HEK293 (cell line): ENCODE measurements at regions of chr20 and their contacts with region 1.

Region 1: GRCh38 chr20:38221119-38221589 is 39.4 kb downstream of the KIAA1755 start:
- H3K4me3 ChIP-seq: no peak overlapping the region
- H3K27ac ChIP-seq: no peak overlapping the region
- H3K4me1 ChIP-seq: no peaks in the 10 kb centered on the region
- CTCF ChIP-seq: peak; percentile 93

Region 2: GRCh38 chr20:37564388-37565133 is 656.6 kb before region 1 on chr20:
- CTCF ChIA-PET with region 1: interaction called, 54 read pairs
- POLR2A ChIA-PET with region 1: no interaction called
- H3K4me3 ChIP-seq: no peak overlapping the region
- H3K27ac ChIP-seq: no peak overlapping the region
- H3K4me1 ChIP-seq: peaks cover 5% of the 10 kb centered on the region; the same call in 1 of the 2 replicates
- CTCF ChIP-seq: peak; percentile 92

Region 3: DNA sequence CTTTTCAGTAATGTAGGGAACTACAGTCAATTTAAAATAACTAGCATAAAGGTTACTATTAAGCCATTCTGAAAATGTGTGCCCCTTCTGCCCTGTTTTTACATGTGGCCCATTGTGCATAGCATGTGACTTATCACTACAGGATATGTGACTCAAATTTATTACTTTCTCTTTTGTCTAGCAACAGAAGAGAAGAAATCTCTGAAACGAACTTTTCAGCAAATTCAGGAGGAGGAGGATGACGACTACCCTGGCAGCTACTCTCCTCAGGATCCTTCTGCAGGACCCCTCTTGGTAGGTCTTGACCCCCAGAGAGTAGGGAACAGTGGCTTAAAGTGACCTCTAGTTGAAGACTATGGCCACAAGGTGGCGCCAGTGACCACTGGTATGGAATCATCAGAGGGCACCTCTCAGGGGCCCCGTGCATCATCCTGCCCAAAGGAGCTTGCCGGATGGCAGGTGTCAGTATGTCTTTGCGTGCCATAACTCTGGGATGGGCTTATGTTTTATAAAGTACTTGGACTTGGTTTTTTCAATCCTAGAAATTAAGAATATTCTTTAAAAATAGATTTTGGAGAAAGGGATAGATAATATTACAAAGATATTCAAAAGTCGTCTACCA is 163.7 kb before region 1 on chr20:
- CTCF ChIA-PET with region 1: interaction called, 220 read pairs
- POLR2A ChIA-PET with region 1: interaction called, 3 read pairs
- H3K4me3 ChIP-seq: no peak overlapping the region
- H3K27ac ChIP-seq: no peak overlapping the region
- H3K4me1 ChIP-seq: peaks cover 3% of the 10 kb centered on the region; the same call in 1 of the 2 replicates
- CTCF ChIP-seq: peak; percentile 75; the same call in 1 of the 2 replicates

Region 4: GRCh38 chr20:38156888-38157634 is 64.1 kb before region 1 on chr20:
- CTCF ChIA-PET with region 1: interaction called, 4 read pairs
- POLR2A ChIA-PET with region 1: interaction called, 12 read pairs
- H3K4me3 ChIP-seq: no peak overlapping the region
- H3K27ac ChIP-seq: no peak overlapping the region
- H3K4me1 ChIP-seq: no peaks in the 10 kb centered on the region
- CTCF ChIP-seq: no peak

Region 5: DNA sequence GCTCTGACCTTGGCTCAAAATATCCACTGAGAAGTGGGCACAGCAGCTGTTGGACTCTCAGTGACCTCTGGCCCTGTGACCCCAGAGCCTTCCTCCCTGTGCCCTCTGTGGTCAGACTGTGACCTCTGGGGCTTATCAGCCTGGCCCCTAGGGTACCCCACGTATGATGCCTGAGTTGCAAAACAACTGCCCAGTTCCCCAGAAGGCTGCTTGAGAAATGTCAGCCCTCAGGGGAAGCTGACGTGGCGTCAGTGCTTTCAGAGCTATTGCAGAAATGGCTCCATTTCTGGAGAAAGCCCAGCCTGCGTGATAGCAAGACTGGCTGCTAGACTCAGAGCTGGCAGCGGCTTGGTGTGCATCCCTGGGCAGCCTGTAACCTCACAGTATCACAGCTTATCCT is 24.6 kb before region 1 on chr20:
- CTCF ChIA-PET with region 1: interaction called, 14 read pairs
- POLR2A ChIA-PET with region 1: no interaction called
- H3K4me3 ChIP-seq: no peak overlapping the region
- H3K27ac ChIP-seq: no peak overlapping the region
- H3K4me1 ChIP-seq: no peaks in the 10 kb centered on the region
- CTCF ChIP-seq: no peak

Region 6: DNA sequence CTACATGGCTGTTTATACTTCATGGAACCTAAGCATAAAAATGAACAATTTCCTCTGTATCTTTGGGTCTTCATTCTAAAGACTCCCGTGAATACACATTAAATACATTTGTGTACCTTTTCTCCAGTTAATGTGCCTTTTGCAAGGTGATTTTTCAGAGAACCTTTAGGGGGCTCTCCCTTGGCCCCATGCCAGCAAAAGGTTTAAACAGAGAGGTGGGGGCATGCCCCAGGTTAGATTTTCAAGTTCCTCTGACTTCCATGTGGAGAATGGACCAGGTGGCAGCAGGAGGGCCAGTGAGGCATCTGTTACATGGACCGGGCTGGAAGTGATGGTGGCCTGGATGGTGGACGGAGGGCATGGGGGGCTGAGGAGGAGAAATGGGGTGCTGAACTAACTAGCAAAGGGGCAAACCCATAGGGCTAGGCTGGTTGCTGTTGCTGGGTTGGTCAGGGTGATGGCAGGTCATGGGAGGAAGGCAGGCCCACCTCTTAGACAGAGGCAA is 62.0 kb after region 1 on chr20:
- CTCF ChIA-PET with region 1: no interaction called
- POLR2A ChIA-PET with region 1: no interaction called
- H3K4me3 ChIP-seq: no peak overlapping the region
- H3K27ac ChIP-seq: no peak overlapping the region
- H3K4me1 ChIP-seq: no peaks in the 10 kb centered on the region
- CTCF ChIP-seq: no peak

Region 7: GRCh38 chr20:38298705-38299288 is 77.6 kb after region 1 on chr20:
- CTCF ChIA-PET with region 1: no interaction called
- POLR2A ChIA-PET with region 1: no interaction called
- H3K4me3 ChIP-seq: no peak overlapping the region
- H3K27ac ChIP-seq: no peak overlapping the region
- H3K4me1 ChIP-seq: no peaks in the 10 kb centered on the region
- CTCF ChIP-seq: no peak

Region 8: GRCh38 chr20:38412877-38413577 is 191.9 kb after region 1 on chr20:
- CTCF ChIA-PET with region 1: interaction called, 12 read pairs
- POLR2A ChIA-PET with region 1: no interaction called
- H3K4me3 ChIP-seq: no peak overlapping the region
- H3K27ac ChIP-seq: no peak overlapping the region
- H3K4me1 ChIP-seq: no peaks in the 10 kb centered on the region
- CTCF ChIP-seq: no peak

Region 9: DNA sequence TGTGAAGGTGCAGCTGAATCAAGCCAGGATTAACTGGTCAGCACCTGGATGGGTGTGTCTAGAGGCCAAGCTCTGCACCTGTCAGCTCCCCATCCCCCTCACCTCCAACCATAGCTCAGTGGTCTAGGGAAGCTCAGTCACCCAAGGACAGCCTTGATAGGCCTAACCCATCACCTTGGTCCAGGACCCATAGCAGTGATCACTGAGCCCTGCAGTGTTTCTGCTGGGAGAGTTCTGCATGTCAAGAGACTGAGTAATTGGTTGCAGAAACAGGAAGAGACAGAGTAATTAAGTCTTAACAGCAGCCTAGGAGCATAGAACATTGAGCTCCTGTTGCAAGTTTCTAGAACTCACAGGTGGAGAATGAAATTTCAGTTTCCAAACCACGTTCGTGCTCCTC is 232.8 kb after region 1 on chr20:
- CTCF ChIA-PET with region 1: no interaction called
- POLR2A ChIA-PET with region 1: no interaction called
- H3K4me3 ChIP-seq: no peak overlapping the region
- H3K27ac ChIP-seq: no peak overlapping the region
- H3K4me1 ChIP-seq: no peaks in the 10 kb centered on the region
- CTCF ChIP-seq: no peak

Region 10: GRCh38 chr20:38685853-38686473 is 464.8 kb after region 1 on chr20:
- CTCF ChIA-PET with region 1: no interaction called
- POLR2A ChIA-PET with region 1: no interaction called
- H3K4me3 ChIP-seq: no peak overlapping the region
- H3K27ac ChIP-seq: no peak overlapping the region
- H3K4me1 ChIP-seq: no peaks in the 10 kb centered on the region
- CTCF ChIP-seq: no peak